Activated CD4-positive, alpha-beta T cell treated with anti-CD3 and anti-CD28 coated beads, Interleukin-2, amount 10 ng/mL, durations not matched to agents 24 days and 14 days (primary cell): ENCODE measurements at regions of chr17 and their contacts with region 1.

Region 1: GRCh38 chr17:78781948-78782916 is at the start of gene CYTH1:
- DNase-seq: peak; percentile 99
- H3K4me3 Mint-ChIP-seq: peak within 1 kb of the TSS; percentile 86
- H3K27ac Mint-ChIP-seq: peak within 1 kb of the TSS; percentile 97
- H3K4me1 Mint-ChIP-seq: peaks cover 45% of the 10 kb centered on the region
- H3K27me3 Mint-ChIP-seq: no peaks in the 10 kb centered on the region
- total RNA-seq, gene CYTH1: 126 and 131 TPM in 2 replicates

Region 2: DNA sequence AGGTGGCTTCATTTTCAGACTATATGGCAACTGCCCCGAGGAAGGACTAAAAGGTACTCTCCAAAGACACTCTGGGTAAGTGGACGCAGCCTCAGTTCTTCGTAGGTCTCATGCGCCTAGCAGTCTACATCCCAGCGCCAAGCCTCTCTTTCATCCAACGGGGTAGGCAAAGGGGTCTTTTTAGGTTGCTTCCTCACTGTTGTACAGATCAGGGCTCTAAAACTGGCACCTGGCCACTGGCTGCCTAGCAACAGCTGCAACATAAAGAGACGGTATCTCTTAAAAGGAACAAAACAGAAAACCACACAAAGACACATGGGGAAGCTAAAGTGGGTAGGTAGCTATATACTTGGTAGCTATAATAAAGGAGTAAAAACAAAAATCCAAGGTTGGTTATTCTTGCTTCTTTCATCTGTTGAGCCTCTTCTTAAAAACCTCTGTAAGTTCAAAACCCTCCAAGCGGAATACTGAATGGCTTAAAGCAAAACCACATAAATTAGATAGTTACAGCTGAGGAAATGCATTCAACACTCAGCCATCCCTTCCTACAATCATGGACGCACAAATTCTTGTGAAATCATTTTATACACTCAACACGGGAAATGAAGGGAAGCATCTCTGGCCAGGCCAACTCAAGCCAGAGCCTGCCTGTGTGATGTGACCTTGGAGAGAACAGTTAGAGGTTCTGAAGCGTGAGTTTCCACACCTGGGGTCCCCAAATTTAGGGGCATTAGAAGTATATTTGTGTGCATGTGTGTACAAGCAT is 22.8 kb before region 1 on chr17:
- intact Hi-C with region 1: loop called (anchors 1 kb)
- DNase-seq: peak; percentile 94
- H3K4me3 Mint-ChIP-seq: peak overlapping the region; percentile 83
- H3K27ac Mint-ChIP-seq: peak overlapping the region; percentile 98
- H3K4me1 Mint-ChIP-seq: peaks cover 62% of the 10 kb centered on the region
- H3K27me3 Mint-ChIP-seq: no peaks in the 10 kb centered on the region

Region 3: GRCh38 chr17:78840725-78841611 is 58.7 kb after region 1 on chr17 and contains the start of gene USP36:
- intact Hi-C with region 1: loop called (anchors 2 kb)
- DNase-seq: peak; percentile 100
- H3K4me3 Mint-ChIP-seq: peak within 1 kb of the TSS; percentile 87
- H3K27ac Mint-ChIP-seq: peak within 1 kb of the TSS; percentile 94
- H3K4me1 Mint-ChIP-seq: peaks cover 31% of the 10 kb centered on the region
- H3K27me3 Mint-ChIP-seq: no peaks in the 10 kb centered on the region
- total RNA-seq, gene USP36: 128 TPM in 2 replicates